ENCODE measurements at regions of chr2 and their contacts with region 1.

Region 1: GRCh38 chr2:12931186-12931844 is 214.6 kb downstream of the TRIB2 start:
- DNase-seq: no peak
- H3K4me3 Mint-ChIP-seq: no peak overlapping the region
- H3K27ac Mint-ChIP-seq: no peak overlapping the region
- H3K4me1 Mint-ChIP-seq: peaks cover 17% of the 10 kb centered on the region
- H3K27me3 Mint-ChIP-seq: no peaks in the 10 kb centered on the region

Region 2: DNA sequence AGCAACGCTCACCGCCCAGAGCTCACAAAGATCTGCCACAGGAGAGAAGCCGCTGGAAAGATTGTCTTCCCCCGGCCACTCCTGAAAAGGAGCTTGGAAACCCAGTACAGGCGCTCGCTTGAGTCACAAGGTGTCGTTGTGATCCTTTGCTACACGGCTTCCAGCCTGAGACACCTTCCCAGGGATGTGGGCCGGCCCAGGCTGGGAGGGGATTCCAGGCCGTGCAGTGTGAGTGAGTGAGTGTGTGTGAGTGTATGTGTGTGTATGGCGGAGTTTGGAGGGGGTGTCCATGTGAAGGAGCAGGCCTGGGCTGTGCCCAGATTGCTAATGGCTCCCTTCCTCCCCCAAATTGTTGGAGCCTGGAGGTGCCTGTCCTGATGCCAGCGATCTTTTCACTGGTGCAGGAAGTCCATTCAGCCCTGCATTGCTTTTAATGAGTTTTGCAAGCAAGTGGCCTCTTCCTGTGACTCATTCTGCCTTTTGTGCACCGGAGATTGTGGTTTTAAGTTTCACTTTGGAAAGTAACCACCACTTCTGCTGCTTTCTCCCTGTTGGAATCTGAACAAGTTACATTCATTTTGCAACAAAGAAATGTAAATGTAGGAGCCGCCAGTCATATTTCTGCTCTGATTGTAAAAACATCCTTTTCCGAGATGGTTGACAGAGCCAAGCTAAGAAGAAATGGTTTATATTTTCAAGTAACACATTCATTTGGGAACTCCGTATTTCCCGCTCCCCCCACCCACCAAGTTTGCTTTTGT is 1101.2 kb before region 1 on chr2:
- CTCF ChIA-PET with region 1: interaction called, 17 read pairs
- POLR2A ChIA-PET with region 1: no interaction called
- intact Hi-C with region 1: loop called (anchors 5 kb)
- DNase-seq: peak; percentile 74
- H3K4me3 Mint-ChIP-seq: peak overlapping the region; percentile 49
- H3K27ac Mint-ChIP-seq: peak overlapping the region; percentile 72
- H3K4me1 Mint-ChIP-seq: peaks cover 41% of the 10 kb centered on the region
- H3K27me3 Mint-ChIP-seq: peaks cover 32% of the 10 kb centered on the region

Region 3: DNA sequence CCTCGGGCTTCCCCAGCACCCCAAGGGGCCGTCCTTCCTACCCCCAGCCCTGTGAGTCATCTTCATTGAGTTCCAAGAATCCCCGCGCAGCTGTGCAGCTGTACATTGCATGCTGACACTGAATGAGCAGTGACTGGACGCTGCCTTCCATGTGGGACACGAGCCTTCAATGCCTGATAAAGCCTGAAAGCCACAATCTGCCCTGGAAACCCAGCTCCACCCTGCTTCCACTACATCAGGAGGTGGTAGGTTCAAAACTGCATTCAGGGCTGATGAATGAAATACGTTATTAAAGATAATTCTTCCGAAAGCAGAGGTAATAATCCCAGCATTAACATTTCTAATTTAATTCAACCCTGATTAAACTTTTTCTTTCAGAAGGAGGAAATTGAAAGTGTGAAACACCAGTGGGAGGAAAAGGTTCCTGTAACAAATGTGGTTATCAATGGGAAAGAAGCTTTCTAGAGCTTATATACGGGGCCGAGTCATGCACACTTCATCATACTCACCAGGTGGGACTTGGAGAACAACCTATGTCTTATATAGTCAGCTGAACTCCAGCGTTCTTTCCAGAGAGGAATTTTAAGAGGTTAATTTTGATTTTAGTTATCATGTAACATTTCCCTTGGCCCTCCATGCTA is 824.8 kb before region 1 on chr2:
- CTCF ChIA-PET with region 1: interaction called, 10 read pairs
- POLR2A ChIA-PET with region 1: interaction called, 3 read pairs
- intact Hi-C with region 1: no loop called
- DNase-seq: peak; percentile 75
- H3K4me3 Mint-ChIP-seq: no peak overlapping the region
- H3K27ac Mint-ChIP-seq: no peak overlapping the region
- H3K4me1 Mint-ChIP-seq: peaks cover 19% of the 10 kb centered on the region
- H3K27me3 Mint-ChIP-seq: no peaks in the 10 kb centered on the region

Region 4: GRCh38 chr2:12721566-12722446 is 209.5 kb before region 1 on chr2:
- CTCF ChIA-PET with region 1: interaction called, 48 read pairs
- POLR2A ChIA-PET with region 1: interaction called, 3 read pairs
- intact Hi-C with region 1: loop called (anchors 1 kb)
- DNase-seq: peak; percentile 63
- H3K4me3 Mint-ChIP-seq: peak overlapping the region; percentile 86
- H3K27ac Mint-ChIP-seq: peak overlapping the region; percentile 75
- H3K4me1 Mint-ChIP-seq: peaks cover 77% of the 10 kb centered on the region
- H3K27me3 Mint-ChIP-seq: no peaks in the 10 kb centered on the region

Region 5: DNA sequence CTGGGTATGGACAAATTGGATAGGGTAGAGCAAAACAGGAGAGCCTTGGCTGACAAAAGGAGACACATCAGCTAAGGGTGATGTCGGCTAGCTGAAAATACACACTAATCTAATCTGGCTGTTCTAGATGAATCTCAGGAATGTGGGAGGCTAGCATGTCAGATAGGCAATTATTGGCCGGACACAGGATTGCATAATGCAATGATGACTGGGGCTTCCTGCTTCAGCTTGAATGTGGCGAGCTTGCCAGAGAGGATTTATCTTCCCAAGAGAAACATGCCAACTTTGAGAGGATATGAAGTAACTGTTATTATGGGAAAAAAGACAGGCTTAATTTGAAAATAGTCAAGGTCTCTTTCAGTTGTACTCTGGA is 112.2 kb before region 1 on chr2:
- CTCF ChIA-PET with region 1: no interaction called
- POLR2A ChIA-PET with region 1: no interaction called
- intact Hi-C with region 1: loop called (anchors 5 kb)
- DNase-seq: no peak
- H3K4me3 Mint-ChIP-seq: no peak overlapping the region
- H3K27ac Mint-ChIP-seq: no peak overlapping the region
- H3K4me1 Mint-ChIP-seq: peaks cover 54% of the 10 kb centered on the region
- H3K27me3 Mint-ChIP-seq: no peaks in the 10 kb centered on the region

Region 6: GRCh38 chr2:12948961-12949353 is 17.6 kb after region 1 on chr2:
- CTCF ChIA-PET with region 1: interaction called, 18 read pairs
- POLR2A ChIA-PET with region 1: no interaction called
- intact Hi-C with region 1: no loop called
- DNase-seq: peak; percentile 46
- H3K4me3 Mint-ChIP-seq: no peak overlapping the region
- H3K27ac Mint-ChIP-seq: no peak overlapping the region
- H3K4me1 Mint-ChIP-seq: peaks cover 9% of the 10 kb centered on the region
- H3K27me3 Mint-ChIP-seq: peaks cover 4% of the 10 kb centered on the region

Region 7: DNA sequence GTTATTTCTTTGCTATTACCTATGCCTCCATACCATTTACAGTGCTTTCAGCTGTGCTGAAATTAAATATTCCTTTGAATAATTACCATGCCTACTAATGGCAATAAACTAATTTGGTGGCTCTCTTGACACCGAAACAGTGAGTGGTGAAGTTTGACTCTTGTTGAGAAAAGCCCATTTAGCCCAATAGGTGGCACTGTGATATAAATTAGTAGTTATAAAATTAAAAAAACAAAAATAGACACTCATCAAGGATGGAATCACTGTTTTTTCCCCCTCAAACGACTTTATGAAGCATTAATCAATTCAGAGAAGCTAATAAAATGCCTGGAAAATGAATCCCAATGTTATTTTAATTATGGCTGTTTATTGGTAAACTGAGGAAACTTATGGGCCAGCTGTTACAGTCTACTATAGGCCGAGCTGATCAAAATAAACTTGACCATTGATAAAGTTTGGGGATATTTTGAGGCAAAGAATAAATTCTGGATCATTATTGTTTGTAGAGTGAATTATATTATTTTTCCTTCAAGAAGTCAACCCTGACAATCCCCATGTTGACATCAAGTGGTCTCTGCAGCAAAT is 125.0 kb after region 1 on chr2:
- CTCF ChIA-PET with region 1: no interaction called
- POLR2A ChIA-PET with region 1: no interaction called
- intact Hi-C with region 1: no loop called
- DNase-seq: no peak
- H3K4me3 Mint-ChIP-seq: no peak overlapping the region
- H3K27ac Mint-ChIP-seq: no peak overlapping the region
- H3K4me1 Mint-ChIP-seq: no peaks in the 10 kb centered on the region
- H3K27me3 Mint-ChIP-seq: peaks cover 20% of the 10 kb centered on the region